CD14-positive monocyte (primary cell): ENCODE measurements at regions of chr3 and their contacts with region 1.

Region 1: DNA sequence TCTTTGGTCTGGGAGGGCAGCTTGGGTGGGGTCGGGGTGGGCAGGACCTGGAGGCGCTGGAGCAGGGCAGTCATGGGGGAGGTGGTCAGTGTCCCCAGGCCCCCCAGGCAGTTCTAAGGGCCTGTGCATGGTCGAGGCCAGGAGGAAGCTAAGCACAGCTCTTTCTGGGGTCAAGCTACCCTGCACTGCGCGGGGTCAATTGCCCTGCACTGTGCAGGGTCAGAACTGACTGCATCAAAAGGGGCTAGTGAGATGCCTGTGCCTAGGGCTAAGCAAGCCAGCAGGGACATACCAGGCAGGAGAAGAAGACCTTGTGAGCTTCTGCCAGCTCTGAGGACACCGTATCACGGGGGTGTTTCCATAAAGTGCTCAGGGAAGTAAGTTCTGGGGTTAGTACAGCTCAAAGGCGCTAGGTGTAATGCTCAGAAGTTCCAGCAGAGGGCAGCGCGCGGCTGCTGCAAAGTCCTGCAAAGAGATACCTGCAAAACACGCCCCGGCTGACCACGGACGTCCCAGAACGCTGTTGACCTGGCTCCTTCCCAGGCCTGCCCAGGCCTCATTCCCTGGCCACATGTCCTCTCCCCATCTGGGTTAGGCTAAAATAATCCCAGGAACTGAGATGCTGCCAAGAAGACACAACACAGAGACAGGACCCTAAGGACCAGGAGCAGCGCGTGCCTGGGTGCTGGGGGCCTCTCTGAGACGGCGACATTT is 18.8 kb upstream of the IQSEC1 start:
- DNase-seq: peak; percentile 73 to 75 (median 74)
- H3K4me3 ChIP-seq: no peak overlapping the region
- H3K4me3 Mint-ChIP-seq: no peak overlapping the region
- H3K27ac ChIP-seq: no peak overlapping the region
- H3K27ac Mint-ChIP-seq: no peak overlapping the region
- H3K4me1 ChIP-seq: peaks cover 3 to 8% of the 10 kb centered on the region in 2 donors
- H3K4me1 Mint-ChIP-seq: peaks cover 29% of the 10 kb centered on the region
- H3K27me3 ChIP-seq: peaks cover 0 to 12% of the 10 kb centered on the region in 2 donors
- H3K27me3 Mint-ChIP-seq: peaks cover 15 to 23% (median 19%) of the 10 kb centered on the region in 3 donors
- CTCF ChIP-seq: peak; percentile 99

Region 2: DNA sequence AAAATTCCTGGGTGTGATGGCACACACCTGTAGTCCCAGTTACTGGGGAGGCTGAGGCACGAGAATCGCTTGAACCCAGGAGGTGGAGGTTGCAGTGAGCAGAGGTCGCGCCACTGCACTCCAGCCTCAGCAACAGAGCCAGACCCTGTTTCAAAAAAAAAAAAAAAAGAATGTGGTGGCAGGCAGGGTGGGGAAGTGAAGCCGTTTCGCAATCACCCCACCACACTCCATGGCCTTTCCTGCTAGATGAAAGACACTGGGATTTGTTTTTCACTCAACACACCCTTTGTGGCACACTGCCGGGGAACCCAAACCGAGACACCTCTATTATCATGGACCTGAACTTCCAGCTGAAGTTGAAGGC is 153.5 kb after region 1 on chr3:
- intact Hi-C with region 1: no loop called
- DNase-seq: peak; percentile 8 to 23 (median 14)
- H3K4me3 ChIP-seq: no peak overlapping the region
- H3K4me3 Mint-ChIP-seq: peak overlapping the region in 1 of 2 donors; percentile 30
- H3K27ac ChIP-seq: no peak overlapping the region
- H3K27ac Mint-ChIP-seq: no peak overlapping the region
- H3K4me1 ChIP-seq: peaks cover 12 to 14% of the 10 kb centered on the region in 2 donors
- H3K4me1 Mint-ChIP-seq: peaks cover 12% of the 10 kb centered on the region
- H3K27me3 ChIP-seq: no peaks in the 10 kb centered on the region
- H3K27me3 Mint-ChIP-seq: peaks cover 4 to 13% (median 4%) of the 10 kb centered on the region in 3 donors
- CTCF ChIP-seq: no peak

Region 3: DNA sequence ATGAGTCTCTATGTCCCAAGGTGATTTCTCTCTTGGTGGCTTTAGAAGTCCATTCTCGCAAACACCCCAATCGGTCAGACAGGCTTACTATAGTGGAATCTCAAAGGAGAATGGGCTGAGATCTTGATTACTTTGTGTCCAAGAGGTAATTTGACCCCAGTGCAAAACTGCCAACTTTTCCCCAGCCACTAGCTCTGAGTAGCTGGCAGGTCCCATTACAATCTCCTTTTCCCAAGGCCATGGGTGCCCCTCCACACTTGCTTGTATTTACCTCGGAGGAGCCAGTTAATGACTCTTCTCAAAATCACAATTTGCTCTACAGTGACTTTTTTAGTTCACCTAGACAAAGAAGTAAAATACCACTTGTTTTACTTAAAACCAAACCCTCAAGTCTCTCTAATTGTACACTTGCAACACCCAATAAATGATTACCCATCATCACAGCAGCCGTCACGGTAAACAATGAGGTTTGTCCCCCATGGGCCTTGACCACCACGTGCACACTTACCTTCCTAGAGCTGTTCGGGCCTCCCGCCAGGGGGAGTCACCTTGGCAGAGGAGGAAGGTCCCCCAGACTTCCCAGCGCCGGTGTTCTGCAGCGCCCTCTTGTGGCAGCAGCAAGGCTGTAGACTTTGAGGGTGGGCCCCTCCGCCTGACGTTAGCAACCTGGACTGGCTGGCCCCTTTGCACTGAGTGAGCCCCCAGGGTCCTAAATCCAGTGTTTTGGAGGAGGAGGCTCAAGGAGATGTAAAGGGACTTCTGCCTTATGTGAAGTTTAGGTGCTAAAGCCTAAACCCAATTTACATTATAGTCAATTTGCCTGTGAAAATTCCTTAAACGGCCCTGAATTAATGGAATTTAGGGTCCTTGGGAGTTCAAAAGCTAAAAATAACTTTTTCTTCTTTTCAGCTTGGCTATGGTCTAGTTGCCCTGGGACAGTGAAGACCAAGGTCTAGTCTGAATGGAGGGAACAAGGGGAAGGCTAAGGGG is 369.4 kb after region 1 on chr3:
- intact Hi-C with region 1: loop called (anchors 5 to 10 kb)
- DNase-seq: peak; percentile 46 to 67 (median 56)
- H3K4me3 ChIP-seq: no peak overlapping the region
- H3K4me3 Mint-ChIP-seq: no peak overlapping the region
- H3K27ac ChIP-seq: no peak overlapping the region
- H3K27ac Mint-ChIP-seq: no peak overlapping the region
- H3K4me1 ChIP-seq: peaks cover 0 to 6% of the 10 kb centered on the region in 2 donors
- H3K4me1 Mint-ChIP-seq: peaks cover 4% of the 10 kb centered on the region
- H3K27me3 ChIP-seq: no peaks in the 10 kb centered on the region
- H3K27me3 Mint-ChIP-seq: peaks cover 4 to 13% (median 11%) of the 10 kb centered on the region in 3 donors
- CTCF ChIP-seq: peak; percentile 93

Region 4: DNA sequence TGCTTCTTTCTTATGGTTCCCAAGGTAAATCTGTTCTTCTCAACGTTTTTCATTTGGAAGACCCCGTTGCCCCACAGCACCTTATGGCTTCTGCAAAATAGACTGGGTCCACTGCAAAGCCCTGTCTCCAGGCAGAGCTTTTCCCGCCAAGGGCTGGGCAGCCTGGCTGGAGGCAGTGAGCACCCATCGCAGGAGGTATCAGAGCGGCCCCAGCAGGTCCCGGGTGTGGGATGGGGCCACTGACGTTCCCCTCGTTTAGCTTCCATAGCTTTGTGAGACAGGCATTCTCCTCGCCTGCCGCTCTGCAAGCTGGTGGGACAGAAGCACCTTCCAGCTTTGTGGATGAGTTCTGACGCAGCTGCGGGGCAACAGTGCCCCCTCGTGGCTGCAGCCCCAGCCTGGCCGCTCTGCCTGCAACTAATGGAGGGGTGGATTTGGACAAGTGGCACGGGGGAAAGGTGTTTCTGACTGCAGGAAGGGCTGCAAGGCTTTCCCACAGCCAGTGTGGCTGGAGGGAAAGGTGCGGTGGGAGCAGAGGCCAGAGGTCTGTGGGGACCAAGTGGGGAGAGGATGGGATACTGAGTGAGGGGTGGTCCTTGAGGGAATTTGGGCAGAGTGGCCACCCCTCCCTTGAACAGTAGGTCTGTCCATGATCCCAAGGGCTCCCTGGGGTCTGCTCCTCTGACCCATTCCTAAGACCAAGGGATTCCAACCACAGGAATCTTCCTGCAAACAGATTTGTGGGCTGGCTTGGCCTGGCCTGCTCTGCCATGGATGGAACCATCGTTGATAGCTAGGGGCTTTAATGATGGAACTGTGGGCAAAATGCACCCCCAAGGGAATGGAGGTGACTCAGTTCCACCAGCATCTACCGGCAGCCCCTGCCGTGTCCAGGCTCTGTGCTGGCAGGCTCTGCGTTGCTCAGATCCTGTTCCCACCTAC is 556.3 kb after region 1 on chr3:
- intact Hi-C with region 1: loop called (anchors 2 to 10 kb)
- DNase-seq: peak; percentile 38 to 55 (median 51)
- H3K4me3 ChIP-seq: peak overlapping the region in 1 of 3 experiments; percentile 5
- H3K4me3 Mint-ChIP-seq: peak overlapping the region in 1 of 2 donors; percentile 35
- H3K27ac ChIP-seq: no peak overlapping the region
- H3K27ac Mint-ChIP-seq: peak overlapping the region in 1 of 7 donors; percentile 64
- H3K4me1 ChIP-seq: peaks cover 18 to 21% of the 10 kb centered on the region in 2 donors
- H3K4me1 Mint-ChIP-seq: peaks cover 23% of the 10 kb centered on the region
- H3K27me3 ChIP-seq: no peaks in the 10 kb centered on the region
- H3K27me3 Mint-ChIP-seq: peaks cover 15 to 33% (median 23%) of the 10 kb centered on the region in 3 donors
- CTCF ChIP-seq: peak; percentile 90